CD8-positive, alpha-beta T cell (primary cell): ENCODE measurements at regions of chr6 and their contacts with region 1.

Region 1: GRCh38 chr6:139638179-139638941 is 263.9 kb upstream of the CITED2 start:
- DNase-seq: no peak
- ATAC-seq: no peak
- H3K4me3 ChIP-seq: no peak overlapping the region
- H3K4me3 Mint-ChIP-seq: no peak overlapping the region
- H3K27ac ChIP-seq: no peak overlapping the region
- H3K27ac Mint-ChIP-seq: no peak overlapping the region
- H3K4me1 ChIP-seq: peaks cover 5% of the 10 kb centered on the region
- H3K4me1 Mint-ChIP-seq: peaks cover 9% of the 10 kb centered on the region
- H3K27me3 ChIP-seq: no peaks in the 10 kb centered on the region
- H3K27me3 Mint-ChIP-seq: peaks cover 8% of the 10 kb centered on the region
- CTCF ChIP-seq: no peak

Region 2: DNA sequence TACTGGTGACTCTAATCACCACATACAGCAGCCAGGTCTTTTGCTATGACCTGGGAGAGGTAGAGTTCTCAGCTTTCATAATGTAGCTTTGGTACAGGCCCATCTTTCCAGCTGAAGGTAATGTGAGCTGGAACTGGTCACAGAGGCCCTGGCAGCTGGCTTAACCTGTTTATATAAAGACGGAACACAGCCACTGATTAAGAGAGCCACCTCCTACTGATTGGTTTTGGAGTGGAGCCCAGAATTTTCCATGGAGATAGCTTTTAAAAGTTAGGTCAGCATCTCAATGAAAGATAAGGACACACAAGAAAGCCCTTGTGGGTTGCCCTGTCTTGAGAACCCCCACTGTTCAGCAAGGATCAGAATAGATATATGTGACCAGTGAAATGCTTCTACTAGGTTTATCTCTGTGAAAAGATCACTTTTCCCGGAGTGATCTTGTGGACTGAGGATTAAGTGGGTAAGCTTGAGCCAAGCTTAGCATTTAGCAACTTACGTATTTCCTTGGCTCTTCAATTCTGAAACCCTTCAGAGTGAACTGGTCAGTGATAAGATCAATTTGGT is 50.2 kb before region 1 on chr6:
- CTCF ChIA-PET with region 1: no interaction called
- POLR2A ChIA-PET with region 1: no interaction called
- intact Hi-C with region 1: loop called in 1 of 2 experiments (anchors 10 kb)
- DNase-seq: no peak
- ATAC-seq: no peak
- H3K4me3 ChIP-seq: no peak overlapping the region
- H3K4me3 Mint-ChIP-seq: no peak overlapping the region
- H3K27ac ChIP-seq: no peak overlapping the region
- H3K27ac Mint-ChIP-seq: no peak overlapping the region
- H3K4me1 ChIP-seq: no peaks in the 10 kb centered on the region
- H3K4me1 Mint-ChIP-seq: no peaks in the 10 kb centered on the region
- H3K27me3 ChIP-seq: no peaks in the 10 kb centered on the region
- H3K27me3 Mint-ChIP-seq: peaks cover 19% of the 10 kb centered on the region
- CTCF ChIP-seq: no peak